ENCODE measurements at regions of chr5 and their contacts with region 1.

Region 1: DNA sequence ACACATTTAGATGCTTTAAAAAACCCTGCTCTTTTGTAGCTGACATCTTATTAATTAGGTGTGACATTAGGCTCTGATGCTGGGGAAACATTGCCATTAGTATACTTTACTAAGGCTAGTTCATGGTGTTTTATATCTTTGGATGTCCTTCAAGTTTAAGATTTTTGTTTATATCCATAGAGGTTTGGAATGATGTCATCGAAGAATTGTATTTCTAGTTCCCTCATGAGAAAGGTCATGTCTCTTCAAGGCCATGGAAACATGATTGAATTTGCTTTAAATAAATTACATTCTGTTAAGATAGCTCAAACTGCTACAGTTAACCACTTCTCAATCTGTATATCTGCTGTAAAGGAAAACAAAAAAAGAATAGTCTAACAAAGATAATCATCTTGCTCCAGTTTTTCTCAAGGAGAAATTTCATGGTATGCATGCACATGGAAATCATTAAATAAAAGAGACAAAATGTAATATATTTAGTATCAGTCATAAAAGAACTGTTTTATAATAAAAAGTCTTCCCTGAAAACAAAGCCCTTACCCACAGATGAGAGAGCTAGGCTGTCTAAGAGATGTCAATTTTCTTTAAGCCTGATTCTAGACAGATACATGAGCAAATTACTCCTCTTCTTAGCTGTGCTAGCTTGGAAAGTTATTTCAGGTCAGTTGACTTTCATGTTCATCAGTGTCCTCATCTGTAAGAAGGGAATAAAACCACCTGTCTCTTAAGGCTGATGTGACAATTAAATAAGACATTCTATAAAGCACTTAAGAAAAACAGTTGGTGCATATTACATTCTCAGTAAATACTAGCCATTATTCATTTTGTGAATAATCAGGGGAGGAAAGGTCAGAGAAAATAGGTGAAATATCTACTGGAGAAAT is 25.0 kb upstream of the STARD4 start:
- DNase-seq: no peak
- H3K4me3 ChIP-seq: no peak overlapping the region
- H3K27ac ChIP-seq: no peak overlapping the region
- H3K4me1 ChIP-seq: no peaks in the 10 kb centered on the region
- H3K27me3 ChIP-seq: no peaks in the 10 kb centered on the region
- CTCF ChIP-seq: no peak
- POLR2A ChIP-seq: no peak

Region 2: GRCh38 chr5:111364992-111365391 is 172.4 kb before region 1 on chr5:
- CTCF ChIA-PET with region 1: no interaction called
- POLR2A ChIA-PET with region 1: no interaction called
- dilution Hi-C with region 1: no loop called
- intact Hi-C with region 1: no loop called
- DNase-seq: no peak
- H3K4me3 ChIP-seq: no peak overlapping the region
- H3K27ac ChIP-seq: no peak overlapping the region
- H3K4me1 ChIP-seq: no peaks in the 10 kb centered on the region
- H3K27me3 ChIP-seq: no peaks in the 10 kb centered on the region
- CTCF ChIP-seq: no peak
- POLR2A ChIP-seq: no peak

Region 3: DNA sequence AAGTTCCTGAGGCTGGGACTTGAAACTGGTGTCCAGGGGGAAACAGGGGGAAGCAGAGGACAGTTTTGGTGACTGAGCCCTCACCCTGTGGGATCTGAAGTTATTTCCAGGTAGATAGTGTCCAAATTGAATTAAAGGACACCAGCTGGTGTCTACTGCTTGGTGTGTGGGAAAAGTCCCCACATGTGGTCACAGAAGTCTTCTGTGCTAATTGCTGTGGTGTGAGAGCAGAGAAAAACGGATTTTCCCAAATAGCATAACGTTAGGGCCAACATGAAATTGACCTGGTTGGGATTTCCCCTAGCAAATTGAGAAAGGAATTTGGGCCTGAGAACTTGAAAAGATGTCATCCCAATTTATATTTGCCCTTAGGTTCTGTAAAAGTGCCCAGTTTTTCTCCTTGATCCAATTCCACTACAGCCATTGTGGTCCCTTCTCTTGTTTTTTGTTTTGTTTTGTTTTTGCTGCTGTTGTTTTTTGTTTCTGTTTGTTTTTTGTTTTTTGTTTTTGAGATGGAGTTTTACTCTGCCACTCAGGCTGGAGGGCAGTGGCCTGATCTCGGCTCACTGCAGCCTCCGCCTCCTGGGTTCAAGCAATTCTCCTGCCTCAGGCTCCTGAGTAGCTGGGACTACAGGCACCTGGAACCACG is 19.4 kb before region 1 on chr5:
- CTCF ChIA-PET with region 1: interaction called, 64 read pairs
- POLR2A ChIA-PET with region 1: interaction called, 4 read pairs
- dilution Hi-C with region 1: no loop called
- intact Hi-C with region 1: loop called (anchors 2 kb)
- DNase-seq: no peak
- H3K4me3 ChIP-seq: no peak overlapping the region
- H3K27ac ChIP-seq: no peak overlapping the region
- H3K4me1 ChIP-seq: peaks cover 10% of the 10 kb centered on the region
- H3K27me3 ChIP-seq: no peaks in the 10 kb centered on the region
- CTCF ChIP-seq: no peak
- POLR2A ChIP-seq: no peak